ENCODE measurements at regions of chr3 and their contacts with region 1.

Region 1: DNA sequence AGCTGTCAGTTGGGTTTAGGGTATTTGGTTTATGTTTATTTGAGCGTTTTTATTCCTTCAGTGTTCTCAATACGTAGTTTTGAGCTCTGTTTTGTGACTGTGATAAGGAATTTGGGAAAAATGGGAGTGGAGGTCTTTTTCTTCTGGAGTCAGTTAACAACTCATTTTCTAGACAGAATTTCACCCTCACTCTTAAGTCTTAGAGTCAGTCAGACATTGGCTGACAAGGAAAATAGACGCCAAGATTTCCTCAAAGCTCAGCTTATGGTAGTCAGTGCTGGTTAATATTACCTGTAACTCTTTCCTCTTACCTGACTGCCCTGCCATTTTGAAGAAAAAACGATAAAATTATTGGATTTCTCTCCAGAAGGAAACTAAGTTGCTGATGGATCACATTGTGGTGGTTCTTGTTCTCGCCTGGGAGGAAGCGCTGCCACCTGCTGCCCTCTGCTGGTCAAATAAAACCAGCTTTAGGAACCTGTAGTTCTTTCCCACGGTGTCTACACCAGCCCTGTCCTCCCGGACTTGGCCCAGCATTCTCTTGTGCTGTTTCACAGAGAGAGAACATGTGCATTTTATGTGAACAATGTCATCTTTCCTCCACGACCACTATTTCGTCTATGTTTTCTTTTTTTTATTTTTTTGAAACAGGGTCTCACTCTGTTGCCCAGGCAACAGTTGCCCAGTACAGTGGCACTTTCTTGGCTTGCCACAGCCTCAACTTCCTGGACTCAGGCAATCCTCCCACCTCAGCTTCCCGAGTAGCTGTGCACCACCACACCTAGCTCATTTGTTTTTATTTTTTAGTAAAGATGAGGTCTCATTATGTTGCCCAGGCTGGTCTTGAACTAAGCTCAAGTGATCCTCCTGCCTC is 41.4 kb upstream of the UMPS start:
- DNase-seq: peak; percentile 89 to 90 (median 90)
- ATAC-seq: peak; percentile 97
- H3K4me3 ChIP-seq: no peak overlapping the region
- H3K27ac ChIP-seq: peak overlapping the region in 1 of 4 donors; percentile 9
- H3K4me1 ChIP-seq: peaks cover 9% of the 10 kb centered on the region
- H3K27me3 ChIP-seq: no peaks in the 10 kb centered on the region
- CTCF ChIP-seq: peak; percentile 72 to 91 (median 90)
- POLR2A ChIP-seq: no peak

Region 2: DNA sequence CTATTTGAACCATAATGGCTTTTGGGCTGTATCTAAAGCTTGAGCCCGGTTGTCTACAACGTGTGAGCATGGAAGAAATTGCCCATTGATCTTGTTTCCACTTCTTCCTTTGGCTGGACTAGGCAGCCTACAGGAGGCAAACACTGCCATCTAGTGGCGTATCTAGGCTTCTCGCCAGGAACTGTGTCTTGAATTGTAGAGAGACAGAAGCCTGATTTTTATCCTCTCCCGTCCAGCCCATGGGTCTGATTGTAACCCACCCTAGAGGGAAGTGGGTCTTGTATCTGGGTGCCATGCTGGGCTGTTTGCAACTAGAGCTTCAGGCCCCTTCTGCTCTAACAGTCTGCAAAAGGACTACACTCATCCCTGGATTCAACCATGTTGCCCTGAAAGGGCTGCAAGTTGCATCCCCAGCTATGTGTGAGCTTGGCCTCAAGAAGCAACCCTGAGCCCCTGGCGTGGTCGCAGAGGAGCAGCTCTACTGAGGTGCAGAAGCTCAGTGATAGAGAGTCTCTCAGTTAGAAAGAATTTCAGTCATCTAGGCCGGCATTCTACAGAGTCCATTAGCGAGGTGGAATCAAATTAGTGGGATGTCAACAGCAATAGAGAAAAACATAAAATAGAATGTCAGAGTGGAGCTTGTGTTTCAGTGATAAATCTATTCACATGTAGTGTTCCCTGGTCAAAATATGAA is 128.8 kb before region 1 on chr3:
- intact Hi-C with region 1: loop called (anchors 5 kb)
- DNase-seq: peak; percentile 80 to 85 (median 81)
- ATAC-seq: peak; percentile 79
- H3K4me3 ChIP-seq: no peak overlapping the region
- H3K27ac ChIP-seq: peak overlapping the region in 2 of 4 donors; percentile 14 to 41
- H3K4me1 ChIP-seq: peaks cover 37% of the 10 kb centered on the region
- H3K27me3 ChIP-seq: no peaks in the 10 kb centered on the region
- CTCF ChIP-seq: peak; percentile 78 to 92 (median 84)
- POLR2A ChIP-seq: no peak

Measured in body of pancreas (tissue), 4 donors.